ENCODE measurements at regions of chr2 and their contacts with region 1.

Region 1: DNA sequence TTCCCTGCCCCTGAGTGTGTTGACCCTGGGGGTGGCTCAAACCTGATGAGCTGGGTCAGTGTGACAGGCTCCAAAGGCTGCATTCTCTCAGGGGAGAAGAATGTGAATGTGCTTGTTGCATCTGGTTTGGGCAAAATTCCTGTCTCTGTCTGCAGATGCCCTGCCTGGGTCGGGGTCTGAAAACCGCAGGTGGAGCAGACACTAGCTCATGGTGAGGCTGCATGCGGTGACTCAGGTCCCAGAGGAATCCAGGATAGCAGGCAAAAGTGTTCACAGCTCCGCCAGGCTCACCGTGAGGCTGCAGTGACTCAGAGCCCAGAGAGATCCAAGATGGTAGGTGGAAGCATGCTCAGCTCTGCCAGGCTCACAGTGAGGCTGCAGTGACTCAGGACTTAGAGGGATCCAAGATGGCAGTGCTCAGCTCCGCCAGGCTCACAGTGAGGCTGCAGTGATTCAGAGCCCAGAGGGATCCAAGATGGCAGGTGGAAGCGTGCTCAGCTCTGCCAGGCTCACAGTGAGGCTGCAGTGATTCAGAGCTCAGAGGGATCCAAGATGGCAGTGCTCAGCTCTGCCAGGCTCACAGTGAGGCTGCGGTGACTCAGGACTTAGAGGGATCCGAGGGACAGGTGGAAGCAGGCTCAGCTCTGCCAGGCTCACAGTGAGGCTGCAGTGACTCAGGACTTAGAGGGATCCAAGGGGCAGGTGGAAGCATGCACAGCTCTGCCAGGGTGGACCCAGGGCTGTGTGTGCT is 200.5 kb downstream of the ACKR3 start:
- DNase-seq: peak; percentile 93 to 95
- H3K4me3 ChIP-seq: no peak overlapping the region
- H3K27ac ChIP-seq: peak overlapping the region; percentile 92
- H3K4me1 ChIP-seq: peaks cover 22% of the 10 kb centered on the region
- H3K27me3 ChIP-seq: no peaks in the 10 kb centered on the region
- CTCF ChIP-seq: no peak

Region 2: DNA sequence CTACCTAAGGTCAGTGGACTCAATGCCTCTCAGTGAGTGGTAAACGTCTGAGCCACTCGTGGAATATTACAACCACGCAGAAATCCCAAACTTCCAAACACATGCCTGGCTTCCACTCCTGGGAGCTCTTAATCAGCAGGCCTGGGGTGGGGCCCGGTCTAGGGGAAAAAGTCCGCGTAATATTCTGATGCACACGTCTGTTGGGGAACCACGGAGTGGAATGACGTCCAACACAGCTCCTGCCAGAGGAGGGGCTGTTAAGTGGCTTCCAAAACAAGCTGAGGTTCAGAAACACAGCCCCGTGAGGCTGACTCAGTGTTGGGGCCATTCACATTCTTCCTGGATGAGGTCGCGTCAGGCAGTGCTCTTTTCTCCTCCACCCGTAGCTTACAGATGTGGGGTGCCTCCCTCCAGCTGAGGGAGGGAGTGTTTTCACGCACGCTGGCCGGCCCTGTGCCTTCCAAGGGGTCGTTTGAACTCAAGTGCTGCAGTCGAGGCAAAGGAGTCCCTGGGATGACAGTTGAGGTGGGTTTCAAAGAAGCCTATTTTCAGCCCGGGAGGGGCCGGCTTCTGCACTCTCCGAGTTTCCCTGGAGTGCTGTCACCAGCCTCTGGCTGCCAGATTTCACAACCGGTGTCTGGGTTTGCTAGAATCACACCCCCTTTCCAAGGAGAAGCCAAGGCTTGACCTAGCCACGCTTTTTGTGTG is 127.4 kb before region 1 on chr2:
- CTCF ChIA-PET with region 1: no interaction called
- POLR2A ChIA-PET with region 1: no interaction called
- intact Hi-C with region 1: loop called (anchors 1 kb)
- DNase-seq: peak; percentile 53 to 56
- H3K4me3 ChIP-seq: no peak overlapping the region
- H3K27ac ChIP-seq: peak overlapping the region; percentile 31; the same call in 1 of the 2 replicates
- H3K4me1 ChIP-seq: no peaks in the 10 kb centered on the region
- H3K27me3 ChIP-seq: peaks cover 12% of the 10 kb centered on the region; the same call in 1 of the 2 replicates
- CTCF ChIP-seq: no peak

Region 3: GRCh38 chr2:236718207-236718992 is 51.7 kb before region 1 on chr2:
- CTCF ChIA-PET with region 1: no interaction called
- POLR2A ChIA-PET with region 1: interaction called, 3 read pairs
- intact Hi-C with region 1: loop called (anchors 2 kb)
- DNase-seq: peak in 1 of 2 experiments; percentile 20
- H3K4me3 ChIP-seq: no peak overlapping the region
- H3K27ac ChIP-seq: no peak overlapping the region
- H3K4me1 ChIP-seq: peaks cover 26% of the 10 kb centered on the region
- H3K27me3 ChIP-seq: peaks cover 12% of the 10 kb centered on the region; the same call in 1 of the 2 replicates
- CTCF ChIP-seq: no peak

Region 4: DNA sequence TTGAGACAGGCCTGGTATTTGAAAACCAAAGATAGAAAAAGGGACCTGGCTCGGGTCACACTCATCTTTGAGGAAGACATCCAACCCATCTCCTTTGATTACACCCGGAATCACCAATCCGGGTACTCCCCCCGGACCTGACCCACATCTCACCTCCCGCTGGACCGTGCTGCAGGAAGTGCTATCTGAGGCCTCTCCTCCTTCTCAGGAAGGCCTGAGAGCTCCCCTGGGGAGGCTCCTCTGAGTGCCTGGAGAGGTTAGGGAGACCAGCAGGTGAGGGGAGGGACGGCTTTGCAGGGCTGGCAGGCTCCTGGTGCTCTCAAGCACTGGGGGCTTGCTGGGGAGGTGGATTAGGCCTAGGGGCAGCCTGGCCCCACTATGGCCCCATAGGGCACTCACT is 29.6 kb before region 1 on chr2:
- CTCF ChIA-PET with region 1: no interaction called
- POLR2A ChIA-PET with region 1: interaction called, 12 read pairs
- intact Hi-C with region 1: no loop called
- DNase-seq: no peak
- H3K4me3 ChIP-seq: no peak overlapping the region
- H3K27ac ChIP-seq: no peak overlapping the region
- H3K4me1 ChIP-seq: peaks cover 10% of the 10 kb centered on the region
- H3K27me3 ChIP-seq: no peaks in the 10 kb centered on the region
- CTCF ChIP-seq: no peak

Region 5: GRCh38 chr2:238484522-238485452 is 1714.7 kb after region 1 on chr2:
- CTCF ChIA-PET with region 1: no interaction called
- POLR2A ChIA-PET with region 1: no interaction called
- intact Hi-C with region 1: no loop called
- DNase-seq: no peak
- H3K4me3 ChIP-seq: no peak overlapping the region
- H3K27ac ChIP-seq: no peak overlapping the region
- H3K4me1 ChIP-seq: no peaks in the 10 kb centered on the region
- H3K27me3 ChIP-seq: peaks cover 34% of the 10 kb centered on the region
- CTCF ChIP-seq: no peak